PC-3 (cell line): ENCODE measurements at regions of chr11 and their contacts with region 1.

Region 1: GRCh38 chr11:64778508-64779346 is at the start of gene SF1:
- DNase-seq: peak; percentile 100
- ATAC-seq: peak; percentile 92
- H3K4me3 ChIP-seq: peak within 1 kb of the TSS; percentile 85
- H3K27ac ChIP-seq: peak within 1 kb of the TSS; percentile 87
- H3K4me1 ChIP-seq: peaks cover 25% of the 10 kb centered on the region
- H3K27me3 ChIP-seq: no peaks in the 10 kb centered on the region
- CTCF ChIP-seq: no peak; the same call in 1 of the 2 replicates
- total RNA-seq, gene SF1: 209 and 217 TPM in 2 replicates

Region 2: DNA sequence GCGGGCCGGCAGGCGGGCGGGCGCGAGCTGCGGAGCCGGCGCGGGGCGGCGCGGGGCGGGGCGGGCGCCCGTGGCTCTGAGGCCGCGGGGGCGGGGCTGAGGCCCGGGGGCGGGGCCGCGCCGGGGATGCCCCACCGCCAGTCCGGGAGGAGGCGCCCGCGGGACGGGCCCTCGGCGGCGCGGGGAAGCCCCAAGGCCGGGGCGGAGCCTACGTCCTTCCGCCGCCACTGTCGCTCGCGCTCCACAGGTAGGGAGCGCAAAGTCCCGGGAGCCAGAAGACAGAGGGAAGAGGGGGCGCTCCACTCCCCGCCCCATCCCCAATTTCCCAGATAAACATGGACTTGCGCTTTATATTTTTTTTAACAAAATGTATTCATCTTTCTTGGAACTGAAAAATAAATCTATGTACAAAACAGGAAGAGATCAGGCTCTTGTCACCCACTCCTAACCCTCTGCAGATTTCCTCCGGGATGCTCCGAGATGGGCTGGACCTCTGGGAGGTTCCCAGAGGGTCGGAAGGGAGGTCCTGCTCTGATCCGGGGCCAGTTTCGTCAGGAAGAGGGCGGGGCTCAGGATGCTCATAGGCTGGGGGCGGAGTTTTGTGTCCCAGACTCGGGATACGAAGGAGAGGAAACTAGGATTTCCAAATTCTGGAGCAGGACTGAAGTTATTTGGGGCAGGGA is 24.6 kb after region 1 on chr11 and contains the start of gene MAP4K2:
- CTCF ChIA-PET with region 1: interaction called, 5 read pairs
- POLR2A ChIA-PET with region 1: interaction called, 4 read pairs
- intact Hi-C with region 1: loop called (anchors 2 kb)
- DNase-seq: peak; percentile 93
- ATAC-seq: peak; percentile 88
- H3K4me3 ChIP-seq: peak within 1 kb of the TSS; percentile 79
- H3K27ac ChIP-seq: peak within 1 kb of the TSS; percentile 66
- H3K4me1 ChIP-seq: peaks cover 19% of the 10 kb centered on the region
- H3K27me3 ChIP-seq: no peaks in the 10 kb centered on the region
- CTCF ChIP-seq: peak; percentile 46
- total RNA-seq, gene MAP4K2: 55.6 and 57.0 TPM in 2 replicates

Region 3: GRCh38 chr11:64810271-64810890 is 31.7 kb after region 1 on chr11 and contains the start of gene MEN1:
- CTCF ChIA-PET with region 1: no interaction called
- POLR2A ChIA-PET with region 1: interaction called, 6 read pairs
- intact Hi-C with region 1: loop called (anchors 2 kb)
- DNase-seq: peak; percentile 99
- ATAC-seq: peak; percentile 99
- H3K4me3 ChIP-seq: peak within 1 kb of the TSS; percentile 89
- H3K27ac ChIP-seq: no peak within 1 kb of the TSS; the same call in 1 of the 2 replicates
- H3K4me1 ChIP-seq: peaks cover 10% of the 10 kb centered on the region; the same call in 1 of the 2 replicates
- H3K27me3 ChIP-seq: no peaks in the 10 kb centered on the region
- CTCF ChIP-seq: no peak
- total RNA-seq, gene MEN1: 46.1 and 54.1 TPM in 2 replicates